ENCODE measurements at regions of chr19 and their contacts with region 1.

Region 1: DNA sequence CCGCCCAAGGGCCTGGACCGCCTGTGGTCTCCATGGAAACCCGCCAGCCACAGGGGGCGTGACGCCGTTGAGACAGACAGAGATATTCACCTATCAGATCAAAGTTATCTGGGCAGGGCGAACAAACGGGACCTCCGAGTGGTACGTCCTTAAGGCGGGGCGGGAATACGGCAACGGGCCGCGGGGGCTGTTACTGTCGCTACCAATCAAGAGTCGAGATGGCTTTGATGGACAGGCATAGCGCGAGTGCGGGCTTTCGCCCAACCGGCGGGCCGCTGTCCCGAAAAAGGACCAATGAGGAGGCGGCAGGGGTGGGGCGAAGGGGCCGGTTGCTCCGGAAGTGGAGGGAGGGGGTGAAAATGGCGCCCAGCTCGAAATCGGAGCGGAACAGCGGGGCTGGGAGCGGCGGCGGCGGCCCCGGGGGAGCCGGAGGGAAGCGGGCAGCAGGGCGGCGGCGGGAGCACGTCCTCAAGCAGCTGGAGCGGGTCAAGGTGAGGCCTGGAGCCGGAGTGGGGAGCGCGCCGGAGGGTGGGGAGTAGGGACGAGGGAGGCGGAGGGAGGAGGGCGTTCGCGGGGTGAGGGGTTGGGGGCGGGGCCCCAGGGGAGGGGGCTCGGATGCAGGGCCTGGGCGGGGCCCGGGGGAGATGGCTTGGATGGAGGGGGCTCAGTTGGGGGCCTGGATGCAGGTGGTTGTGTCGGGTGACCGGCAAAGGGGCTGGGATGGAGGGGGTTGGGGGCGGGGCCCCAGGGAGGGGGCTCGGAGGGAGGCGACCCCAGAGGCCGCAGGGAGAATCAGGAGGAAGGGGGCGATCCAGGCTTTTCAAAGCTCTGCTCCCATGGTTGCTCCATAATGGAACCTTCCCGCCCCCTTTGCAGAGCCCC is at the start of gene DCAF15:
- DNase-seq: peak; percentile 96 to 100 (median 98)
- ATAC-seq: peak; percentile 97
- H3K4me3 ChIP-seq: peak within 1 kb of the TSS; percentile 82
- H3K4me3 Mint-ChIP-seq: peak within 1 kb of the TSS; percentile 100
- H3K27ac ChIP-seq: peak within 1 kb of the TSS; percentile 69 to 71
- H3K27ac Mint-ChIP-seq: peak within 1 kb of the TSS; percentile 97
- H3K4me1 ChIP-seq: peaks cover 30% of the 10 kb centered on the region
- H3K4me1 Mint-ChIP-seq: peaks cover 13% of the 10 kb centered on the region
- H3K27me3 ChIP-seq: no peaks in the 10 kb centered on the region
- H3K27me3 Mint-ChIP-seq: no peaks in the 10 kb centered on the region
- CTCF ChIP-seq: no peak
- total RNA-seq, gene DCAF15: 84.9 to 85.0 TPM

Region 2: DNA sequence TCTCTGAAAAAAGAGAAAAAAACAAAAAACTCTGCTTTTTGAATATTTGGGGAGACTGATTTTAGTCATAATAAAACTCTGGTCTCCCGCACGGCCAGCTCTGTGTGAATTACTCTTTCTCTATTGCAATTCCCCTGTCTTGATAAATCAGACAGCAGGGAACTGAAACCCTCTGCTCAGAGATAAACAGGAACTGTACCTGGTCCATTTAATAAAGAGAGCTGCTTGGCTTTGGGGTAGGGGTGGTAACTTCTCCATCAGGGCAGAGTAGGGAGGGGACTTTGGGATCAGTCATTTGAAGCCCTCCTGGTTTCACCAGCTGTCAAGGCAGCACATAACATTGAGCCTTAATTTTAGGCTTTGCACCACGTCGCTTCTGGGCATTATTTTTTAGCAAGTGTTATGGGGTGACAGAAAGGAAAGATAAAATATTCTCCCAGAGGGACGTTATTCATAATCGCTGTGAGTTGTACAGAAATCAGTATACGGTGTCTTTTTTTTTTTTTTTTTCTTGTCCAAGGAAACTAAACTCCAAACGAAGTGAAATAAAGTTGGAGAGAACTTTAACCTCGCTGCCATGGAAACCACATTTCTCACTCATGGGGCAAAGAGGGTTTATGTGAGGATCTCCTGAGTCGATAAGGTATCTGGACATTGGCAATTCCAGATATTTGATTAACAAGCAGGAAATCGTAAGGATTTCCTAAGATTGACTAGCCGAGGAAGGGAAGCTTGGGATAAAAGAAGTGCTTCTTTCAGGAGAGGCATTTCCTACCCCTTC is 287.1 kb before region 1 on chr19:
- CTCF ChIA-PET with region 1: no interaction called
- POLR2A ChIA-PET with region 1: no interaction called
- intact Hi-C with region 1: no loop called
- DNase-seq: no peak
- ATAC-seq: no peak
- H3K4me3 ChIP-seq: no peak overlapping the region
- H3K4me3 Mint-ChIP-seq: no peak overlapping the region
- H3K27ac ChIP-seq: no peak overlapping the region
- H3K27ac Mint-ChIP-seq: no peak overlapping the region
- H3K4me1 ChIP-seq: no peaks in the 10 kb centered on the region
- H3K4me1 Mint-ChIP-seq: no peaks in the 10 kb centered on the region
- H3K27me3 ChIP-seq: no peaks in the 10 kb centered on the region
- H3K27me3 Mint-ChIP-seq: no peaks in the 10 kb centered on the region
- CTCF ChIP-seq: no peak

Region 3: GRCh38 chr19:13894552-13894951 is 57.8 kb before region 1 on chr19:
- CTCF ChIA-PET with region 1: no interaction called
- POLR2A ChIA-PET with region 1: no interaction called
- intact Hi-C with region 1: no loop called
- DNase-seq: no peak
- ATAC-seq: no peak
- H3K4me3 ChIP-seq: no peak overlapping the region
- H3K4me3 Mint-ChIP-seq: no peak overlapping the region
- H3K27ac ChIP-seq: no peak overlapping the region
- H3K27ac Mint-ChIP-seq: no peak overlapping the region
- H3K4me1 ChIP-seq: no peaks in the 10 kb centered on the region
- H3K4me1 Mint-ChIP-seq: no peaks in the 10 kb centered on the region
- H3K27me3 ChIP-seq: no peaks in the 10 kb centered on the region
- H3K27me3 Mint-ChIP-seq: no peaks in the 10 kb centered on the region
- CTCF ChIP-seq: no peak

Region 4: GRCh38 chr19:13905938-13906904 is 46.2 kb before region 1 on chr19 and contains the starts of genes BRME1 and CC2D1A:
- CTCF ChIA-PET with region 1: no interaction called
- POLR2A ChIA-PET with region 1: interaction called, 4 read pairs
- intact Hi-C with region 1: loop called in 1 of 2 experiments (anchors 1 kb)
- DNase-seq: peak; percentile 88 to 96 (median 92)
- ATAC-seq: peak; percentile 99
- H3K4me3 ChIP-seq: peak within 1 kb of the TSS; percentile 77
- H3K4me3 Mint-ChIP-seq: peak within 1 kb of the TSS; percentile 92
- H3K27ac ChIP-seq: peak within 1 kb of the TSS in 1 of 2 donors; percentile 49
- H3K27ac Mint-ChIP-seq: peak within 1 kb of the TSS; percentile 66
- H3K4me1 ChIP-seq: peaks cover 24% of the 10 kb centered on the region
- H3K4me1 Mint-ChIP-seq: peaks cover 13% of the 10 kb centered on the region
- H3K27me3 ChIP-seq: no peaks in the 10 kb centered on the region
- H3K27me3 Mint-ChIP-seq: no peaks in the 10 kb centered on the region
- CTCF ChIP-seq: no peak
- total RNA-seq, gene BRME1: 1.1 to 1.3 TPM
- total RNA-seq, gene CC2D1A: 16.4 to 16.9 TPM

Region 5: DNA sequence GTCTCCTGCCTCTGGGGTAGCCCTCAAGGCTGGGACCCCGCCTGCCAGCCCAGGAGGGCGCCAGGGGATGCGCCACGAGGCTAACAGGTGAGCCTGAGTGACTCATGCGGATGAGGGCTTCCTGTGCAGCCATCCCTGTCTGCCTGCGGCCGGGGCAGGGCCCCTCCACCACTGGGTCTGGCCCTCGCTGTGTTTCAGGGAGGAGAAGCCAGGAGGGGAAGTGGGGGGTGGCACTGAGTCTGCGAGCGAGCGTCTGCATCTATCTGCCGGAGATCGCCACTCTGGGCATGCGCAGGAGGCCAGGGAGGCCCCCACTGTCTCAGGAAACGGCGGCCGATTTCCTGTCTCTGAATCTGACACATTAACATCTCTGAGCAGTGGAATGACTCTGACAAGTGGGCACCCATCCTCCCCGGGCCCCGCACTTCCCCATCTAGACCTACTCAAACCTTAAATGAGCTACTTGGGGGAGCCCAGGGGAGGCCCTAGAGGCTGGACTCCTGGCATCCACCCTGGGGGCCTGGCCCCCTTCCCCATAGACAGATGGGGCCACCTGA is 34.0 kb after region 1 on chr19:
- CTCF ChIA-PET with region 1: interaction called, 4 read pairs
- POLR2A ChIA-PET with region 1: interaction called, 30 read pairs
- intact Hi-C with region 1: loop called (anchors 1 to 5 kb)
- DNase-seq: peak; percentile 95 to 100 (median 99)
- ATAC-seq: peak; percentile 87
- H3K4me3 ChIP-seq: peak overlapping the region; percentile 45
- H3K4me3 Mint-ChIP-seq: peak overlapping the region; percentile 83
- H3K27ac ChIP-seq: peak overlapping the region; percentile 97 to 99
- H3K27ac Mint-ChIP-seq: peak overlapping the region; percentile 97
- H3K4me1 ChIP-seq: peaks cover 93% of the 10 kb centered on the region
- H3K4me1 Mint-ChIP-seq: peaks cover 88% of the 10 kb centered on the region
- H3K27me3 ChIP-seq: no peaks in the 10 kb centered on the region
- H3K27me3 Mint-ChIP-seq: no peaks in the 10 kb centered on the region
- CTCF ChIP-seq: no peak

Region 6: GRCh38 chr19:14031719-14032480 is 79.5 kb after region 1 on chr19 and contains the start of gene IL27RA:
- CTCF ChIA-PET with region 1: interaction called, 3 read pairs
- POLR2A ChIA-PET with region 1: interaction called, 33 read pairs
- intact Hi-C with region 1: loop called (anchors 1 to 5 kb)
- DNase-seq: peak; percentile 67 to 94 (median 83)
- ATAC-seq: peak; percentile 82
- H3K4me3 ChIP-seq: peak within 1 kb of the TSS; percentile 86
- H3K4me3 Mint-ChIP-seq: peak within 1 kb of the TSS; percentile 98
- H3K27ac ChIP-seq: peak within 1 kb of the TSS; percentile 93 to 98
- H3K27ac Mint-ChIP-seq: peak within 1 kb of the TSS; percentile 94
- H3K4me1 ChIP-seq: peaks cover 49% of the 10 kb centered on the region
- H3K4me1 Mint-ChIP-seq: peaks cover 36% of the 10 kb centered on the region
- H3K27me3 ChIP-seq: no peaks in the 10 kb centered on the region
- H3K27me3 Mint-ChIP-seq: no peaks in the 10 kb centered on the region
- CTCF ChIP-seq: no peak
- total RNA-seq, gene IL27RA: 25.0 to 26.7 TPM

Region 7: DNA sequence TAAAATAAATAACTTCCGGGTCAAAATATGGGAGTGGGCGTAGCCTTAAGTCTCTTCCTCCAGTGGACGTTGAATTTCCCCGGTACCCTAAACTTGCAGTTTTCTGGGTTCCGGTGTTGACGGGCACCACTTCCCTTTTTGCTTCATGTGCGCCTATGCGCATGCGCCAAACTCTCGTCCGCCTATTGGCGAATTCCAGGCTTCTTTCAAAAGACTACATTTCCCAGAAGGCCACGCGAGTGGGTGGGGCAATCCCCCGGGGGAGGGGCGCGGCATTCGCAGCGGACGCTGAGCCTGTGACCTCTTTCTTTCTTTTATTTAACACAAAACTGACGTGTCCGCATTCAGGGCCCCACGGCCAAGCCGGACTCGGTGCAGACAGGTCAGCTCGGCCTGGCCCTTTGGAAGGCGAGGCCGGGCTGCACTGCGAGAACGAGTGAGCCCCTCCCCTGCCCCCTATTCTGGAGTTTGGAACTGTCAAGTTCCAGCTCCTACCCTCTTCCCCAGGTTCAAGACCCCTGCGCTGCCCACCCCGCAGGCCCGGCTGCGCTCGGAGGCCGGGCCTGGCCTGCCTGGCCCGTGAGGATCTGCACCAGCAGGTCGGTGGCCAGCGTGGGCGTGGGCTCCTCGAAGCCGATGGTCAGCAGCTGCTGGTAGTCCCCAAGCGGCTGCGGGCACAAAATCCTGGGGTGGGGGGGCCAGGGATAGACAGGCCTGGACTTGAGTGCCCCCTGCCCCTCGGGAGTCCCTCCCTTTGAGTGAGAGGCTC is 129.1 kb after region 1 on chr19:
- CTCF ChIA-PET with region 1: no interaction called
- POLR2A ChIA-PET with region 1: no interaction called
- intact Hi-C with region 1: loop called in 1 of 2 experiments (anchors 2 kb)
- DNase-seq: peak; percentile 98 to 100 (median 99)
- ATAC-seq: peak; percentile 94
- H3K4me3 ChIP-seq: peak overlapping the region; percentile 81
- H3K4me3 Mint-ChIP-seq: peak overlapping the region; percentile 91
- H3K27ac ChIP-seq: peak overlapping the region; percentile 73 to 74
- H3K27ac Mint-ChIP-seq: peak overlapping the region; percentile 73
- H3K4me1 ChIP-seq: peaks cover 23% of the 10 kb centered on the region
- H3K4me1 Mint-ChIP-seq: peaks cover 14% of the 10 kb centered on the region
- H3K27me3 ChIP-seq: no peaks in the 10 kb centered on the region
- H3K27me3 Mint-ChIP-seq: no peaks in the 10 kb centered on the region
- CTCF ChIP-seq: no peak

Measured in CD4-positive, alpha-beta T cell (primary cell).